ENCODE measurements at regions of chr4 and their contacts with region 1.

Region 1: DNA sequence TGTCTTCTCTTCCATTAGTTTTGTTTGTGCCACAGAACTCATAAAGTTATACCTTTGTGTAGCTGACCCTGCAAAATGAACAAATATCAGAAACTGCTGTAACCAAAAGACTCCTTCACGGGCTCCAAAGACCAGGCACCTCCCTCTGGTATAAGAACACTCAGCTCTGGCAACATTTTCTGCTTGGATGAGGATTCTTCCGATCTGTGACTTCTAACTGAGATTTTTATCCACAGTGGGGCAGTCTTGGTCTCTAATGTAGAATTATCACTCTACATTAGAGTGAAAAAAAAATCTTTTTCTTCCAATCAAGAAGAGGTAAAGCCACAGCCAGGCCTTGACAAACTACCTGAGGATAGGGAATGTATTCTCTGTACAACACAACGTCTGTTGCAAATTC is 38.5 kb upstream of the PRSS48 start:
- DNase-seq: no peak
- ATAC-seq: peak; percentile 87

Region 2: DNA sequence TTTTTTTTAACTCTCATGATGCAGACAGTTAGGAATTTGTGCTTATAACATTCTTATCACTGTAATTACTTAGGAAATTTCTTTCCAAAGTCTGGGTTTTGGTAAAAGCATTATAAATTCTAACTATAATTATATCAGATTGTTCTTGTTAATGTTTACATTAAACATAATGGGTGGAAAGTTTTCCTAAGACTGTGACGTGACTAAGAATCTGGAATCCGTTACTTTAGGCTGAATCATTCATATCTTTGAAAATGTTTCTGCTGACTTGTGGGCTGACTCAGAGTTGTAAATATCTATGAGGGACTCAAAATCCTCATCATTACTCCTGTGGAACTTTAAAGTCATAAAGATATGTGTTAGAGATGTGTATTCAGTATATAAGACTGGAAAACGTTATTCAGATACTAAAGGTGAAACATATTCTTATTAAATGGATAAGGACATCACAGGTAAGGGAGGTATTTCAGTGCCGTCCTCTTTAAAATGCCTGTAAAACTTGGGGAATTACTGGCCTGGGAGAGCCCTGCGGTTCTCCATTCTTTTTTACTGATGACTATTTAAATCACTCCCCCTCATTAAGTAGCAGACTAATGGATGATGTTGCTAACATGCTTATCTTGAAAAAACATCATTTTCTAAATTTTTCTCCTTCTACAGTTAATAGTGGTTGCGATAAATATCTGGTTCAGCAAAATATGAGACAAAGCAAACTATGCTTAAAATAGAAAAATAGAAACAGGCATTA is 1001.2 kb before region 1 on chr4:
- intact Hi-C with region 1: loop called (anchors 10 kb)
- DNase-seq: no peak
- ATAC-seq: no peak

Region 3: DNA sequence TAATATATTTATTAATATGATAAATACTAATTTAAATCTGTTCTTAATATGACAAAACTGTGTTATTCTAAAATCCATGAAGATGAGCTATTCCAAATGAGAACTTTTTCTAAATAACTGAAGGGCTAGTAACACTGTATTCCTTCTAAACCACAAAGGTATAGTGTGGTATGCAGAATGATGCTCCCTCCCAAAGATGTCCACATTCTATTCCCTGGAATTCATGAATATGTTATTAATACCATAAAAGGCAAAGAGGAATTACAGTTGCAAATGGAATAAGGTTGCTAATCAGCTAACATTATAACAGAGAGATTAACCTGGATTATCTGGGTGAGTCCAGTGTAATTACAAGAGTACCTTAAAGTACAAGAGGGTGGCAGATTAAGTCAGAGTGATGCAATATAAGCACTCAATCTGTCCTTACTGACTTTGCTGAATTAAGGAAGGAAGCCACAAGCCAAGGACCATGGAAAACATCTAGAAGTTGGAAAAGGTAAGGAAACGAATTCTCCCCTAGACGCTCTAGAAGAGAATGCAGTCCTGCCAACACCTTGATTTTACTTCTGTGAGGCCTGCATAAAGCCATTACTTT is 677.2 kb before region 1 on chr4:
- intact Hi-C with region 1: no loop called
- DNase-seq: no peak
- ATAC-seq: no peak

Region 4: DNA sequence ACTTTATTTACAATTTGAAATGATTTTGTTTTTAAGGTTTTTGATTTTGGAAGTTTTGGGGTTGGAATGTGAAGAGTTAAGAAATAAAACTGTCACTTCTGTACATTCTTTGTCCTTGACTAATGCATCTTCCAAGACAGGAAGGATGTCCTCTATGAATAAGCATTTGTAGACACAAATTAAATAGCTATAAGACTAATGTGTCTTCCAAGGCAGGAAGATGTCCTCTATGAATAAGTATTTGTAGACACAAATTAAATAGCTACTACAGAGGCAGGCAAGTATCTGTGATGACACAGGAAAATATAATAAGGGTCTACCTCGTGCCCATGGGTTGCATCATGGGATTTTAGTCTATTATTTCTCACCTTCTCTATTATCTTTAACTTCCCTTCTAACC is 53.0 kb after region 1 on chr4:
- intact Hi-C with region 1: no loop called
- DNase-seq: no peak
- ATAC-seq: no peak